GM13977 (cell line): ENCODE measurements at regions of chr5 and their contacts with region 1.

Region 1: GRCh38 chr5:147453875-147454814 is 55.7 kb downstream of the DPYSL3 start:
- DNase-seq: peak; percentile 91
- CTCF ChIP-seq: peak; percentile 90

Region 2: DNA sequence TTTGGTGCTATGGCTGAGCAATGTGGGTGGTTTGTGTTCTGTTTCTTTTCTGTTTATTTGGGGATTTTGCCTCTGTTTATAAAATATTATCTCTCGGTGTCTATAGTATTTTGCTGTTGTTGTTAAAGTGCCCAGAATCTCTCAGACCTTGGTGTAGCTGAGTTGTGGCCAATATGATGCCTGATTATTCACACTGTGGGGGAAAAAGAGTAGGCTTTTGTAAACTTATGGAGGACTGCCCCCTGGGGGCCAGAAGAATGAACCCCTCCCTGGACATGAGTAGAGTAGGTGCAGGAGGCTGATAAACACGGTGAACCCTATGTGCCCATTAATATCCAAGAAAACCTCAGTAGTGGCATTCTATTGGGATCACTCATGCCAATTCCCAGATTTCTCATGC is 104.7 kb after region 1 on chr5:
- in situ Hi-C with region 1: loop called (anchors 25 kb)
- DNase-seq: peak; percentile 34
- CTCF ChIP-seq: peak; percentile 54